ENCODE measurements at regions of chr13 and their contacts with region 1.

Region 1: GRCh38 chr13:31797154-31797775 is 57.9 kb downstream of the RXFP2 start:
- DNase-seq: peak; percentile 55
- ATAC-seq: peak; percentile 82
- H3K4me3 ChIP-seq: no peak overlapping the region
- H3K27ac ChIP-seq: no peak overlapping the region
- H3K4me1 ChIP-seq: no peaks in the 10 kb centered on the region
- H3K27me3 ChIP-seq: peaks cover 8% of the 10 kb centered on the region
- CTCF ChIP-seq: peak; percentile 69
- POLR2A ChIP-seq: no peak
- RAD21 ChIP-seq: peak; percentile 76

Region 2: DNA sequence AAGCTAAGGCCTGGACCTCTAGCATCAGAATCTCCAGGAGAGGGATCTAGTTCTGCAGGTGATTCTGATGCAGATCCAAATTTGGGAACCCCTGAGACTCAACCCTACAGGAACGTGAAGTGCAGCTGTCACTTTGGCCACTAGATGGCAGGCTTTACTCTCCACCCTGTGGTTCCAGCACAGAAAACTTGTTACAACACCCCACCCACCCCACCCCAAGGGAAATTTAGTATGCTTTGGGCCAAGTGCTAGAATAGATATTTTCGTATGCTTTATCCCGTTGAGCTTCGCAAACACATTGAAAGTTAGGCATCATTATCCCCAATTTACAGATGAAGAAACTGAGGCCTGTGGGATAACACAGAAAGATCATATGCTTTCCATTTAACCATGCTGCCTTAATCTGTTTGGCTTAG is 365.5 kb before region 1 on chr13:
- CTCF ChIA-PET with region 1: interaction called, 3 read pairs
- POLR2A ChIA-PET with region 1: no interaction called
- dilution Hi-C with region 1: no loop called
- in situ Hi-C with region 1: loop called (anchors 5 kb)
- intact Hi-C with region 1: loop called (anchors 1 kb)
- DNase-seq: peak; percentile 28
- ATAC-seq: peak; percentile 67; the same call in 1 of the 2 replicates
- H3K4me3 ChIP-seq: no peak overlapping the region
- H3K27ac ChIP-seq: no peak overlapping the region
- H3K4me1 ChIP-seq: no peaks in the 10 kb centered on the region
- H3K27me3 ChIP-seq: peaks cover 28% of the 10 kb centered on the region
- CTCF ChIP-seq: peak; percentile 61
- POLR2A ChIP-seq: no peak
- RAD21 ChIP-seq: peak; percentile 61

Region 3: DNA sequence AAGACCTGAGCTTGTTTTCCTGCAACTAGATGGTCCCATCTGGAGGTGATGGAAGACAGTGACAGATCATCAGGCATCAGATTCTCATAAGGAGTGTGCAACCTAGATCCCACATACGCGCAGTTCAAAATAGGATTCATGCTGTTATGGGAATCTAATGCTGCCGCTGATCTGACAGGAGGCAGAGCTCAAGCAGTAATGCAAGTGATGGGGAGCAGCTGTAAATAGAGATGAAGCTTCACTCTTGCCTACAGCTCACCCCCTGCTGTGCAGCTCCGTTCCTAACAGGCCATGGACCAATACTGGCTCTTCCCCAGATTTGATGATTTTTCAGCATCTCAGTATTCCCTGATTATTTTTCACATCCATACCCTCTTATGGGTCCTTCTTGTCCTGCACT is 266.3 kb before region 1 on chr13:
- CTCF ChIA-PET with region 1: no interaction called
- POLR2A ChIA-PET with region 1: no interaction called
- dilution Hi-C with region 1: no loop called
- in situ Hi-C with region 1: loop called (anchors 5 kb)
- intact Hi-C with region 1: no loop called
- DNase-seq: no peak
- ATAC-seq: no peak
- H3K4me3 ChIP-seq: no peak overlapping the region
- H3K27ac ChIP-seq: no peak overlapping the region
- H3K4me1 ChIP-seq: no peaks in the 10 kb centered on the region
- H3K27me3 ChIP-seq: no peaks in the 10 kb centered on the region; the same call in 1 of the 2 replicates
- CTCF ChIP-seq: no peak
- POLR2A ChIP-seq: no peak
- RAD21 ChIP-seq: no peak

Region 4: GRCh38 chr13:31538067-31539042 is 258.9 kb before region 1 on chr13:
- CTCF ChIA-PET with region 1: interaction called, 6 read pairs
- POLR2A ChIA-PET with region 1: no interaction called
- dilution Hi-C with region 1: no loop called
- in situ Hi-C with region 1: loop called (anchors 5 kb)
- intact Hi-C with region 1: loop called (anchors 1 kb)
- DNase-seq: peak; percentile 45
- ATAC-seq: peak; percentile 87
- H3K4me3 ChIP-seq: no peak overlapping the region
- H3K27ac ChIP-seq: no peak overlapping the region
- H3K4me1 ChIP-seq: no peaks in the 10 kb centered on the region
- H3K27me3 ChIP-seq: no peaks in the 10 kb centered on the region; the same call in 1 of the 2 replicates
- CTCF ChIP-seq: peak; percentile 58
- POLR2A ChIP-seq: no peak
- RAD21 ChIP-seq: peak; percentile 62

Region 5: DNA sequence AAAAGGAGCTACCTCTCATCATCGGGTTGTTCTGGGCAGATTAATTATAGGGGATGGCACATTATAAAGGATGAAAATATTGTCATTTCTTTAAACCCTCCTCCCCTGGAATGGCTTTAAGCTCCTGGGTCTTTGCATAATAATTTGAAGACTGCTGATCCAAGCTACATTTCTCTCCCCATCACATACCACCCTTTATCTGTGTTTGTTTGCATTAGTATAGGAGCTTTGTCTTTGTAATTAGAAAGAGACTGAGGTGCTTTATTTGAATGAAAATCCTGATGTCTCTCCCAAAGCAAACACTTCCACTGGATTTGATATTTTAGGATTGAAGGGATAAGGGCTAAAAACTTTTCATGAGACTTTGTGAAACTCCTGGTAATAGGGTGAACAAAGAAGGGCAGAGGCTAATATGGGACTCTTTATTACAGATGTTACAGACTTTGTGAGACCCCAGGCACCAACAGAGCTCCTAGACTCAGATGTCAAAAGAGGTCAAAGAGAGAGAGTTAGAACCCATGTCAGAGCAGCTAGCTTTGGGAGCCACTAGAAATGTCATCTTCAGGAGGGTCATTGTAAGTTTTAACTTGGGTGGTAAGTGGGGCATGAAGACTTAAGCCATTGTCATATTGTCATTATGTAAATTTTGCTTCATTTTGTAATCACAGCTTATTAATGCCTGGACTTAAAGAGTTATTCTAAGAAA is 133.2 kb before region 1 on chr13:
- CTCF ChIA-PET with region 1: no interaction called
- POLR2A ChIA-PET with region 1: no interaction called
- dilution Hi-C with region 1: no loop called
- in situ Hi-C with region 1: no loop called
- intact Hi-C with region 1: no loop called
- DNase-seq: no peak
- ATAC-seq: no peak
- H3K4me3 ChIP-seq: no peak overlapping the region
- H3K27ac ChIP-seq: no peak overlapping the region
- H3K4me1 ChIP-seq: no peaks in the 10 kb centered on the region
- H3K27me3 ChIP-seq: 0 out of 2 replicates have a peak, but pooled peaks cover 1% of the 10 kb centered on the region
- CTCF ChIP-seq: no peak
- POLR2A ChIP-seq: no peak
- RAD21 ChIP-seq: no peak

Measured in IMR-90 (cell line).